ENCODE measurements at regions of chr6 and their contacts with region 1.

Region 1: DNA sequence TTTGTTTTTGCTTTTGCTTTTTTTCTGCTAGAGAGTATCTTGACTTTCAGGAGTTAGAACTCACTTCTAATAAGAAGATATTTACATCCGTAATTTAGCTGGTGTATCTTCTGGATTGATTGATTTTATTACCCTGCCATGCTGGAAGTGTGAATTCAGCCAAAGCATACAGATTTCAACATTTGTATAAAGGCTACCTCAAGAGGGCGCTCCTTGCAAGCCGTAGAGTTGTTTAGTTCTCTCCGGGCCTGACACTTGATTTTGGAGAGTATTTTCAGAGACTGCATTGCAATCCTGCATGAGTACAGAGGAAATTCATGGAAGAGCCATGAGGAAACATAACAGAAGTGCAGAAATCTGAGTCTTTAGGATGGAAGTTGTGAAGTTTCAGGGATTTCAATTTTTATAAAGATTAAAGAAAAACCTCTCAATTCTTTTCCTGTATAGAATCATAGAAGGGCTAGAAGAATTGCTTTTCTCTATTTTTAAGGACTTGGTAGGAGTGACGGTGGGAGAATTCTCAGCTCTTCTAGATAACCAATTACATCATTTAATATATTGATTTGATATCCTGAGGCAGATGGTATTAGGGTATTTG is 66.7 kb upstream of the TIAM2 start:
- DNase-seq: peak in 2 of 5 donors; percentile 48 to 57
- ATAC-seq: peak in 3 of 4 donors; percentile 57 to 65 (median 63)
- H3K4me3 ChIP-seq: no peak overlapping the region
- H3K27ac ChIP-seq: no peak overlapping the region
- H3K4me1 ChIP-seq: peaks cover 0 to 24% (median 8%) of the 10 kb centered on the region in 12 donors
- H3K27me3 ChIP-seq: no peaks in the 10 kb centered on the region
- CTCF ChIP-seq: peak; percentile 60 to 85 (median 74)
- POLR2A ChIP-seq: no peak

Region 2: GRCh38 chr6:155066361-155066760 is 137.9 kb after region 1 on chr6:
- intact Hi-C with region 1: no loop called
- DNase-seq: no peak
- ATAC-seq: no peak
- H3K4me3 ChIP-seq: no peak overlapping the region
- H3K27ac ChIP-seq: no peak overlapping the region
- H3K4me1 ChIP-seq: no peaks in the 10 kb centered on the region
- H3K27me3 ChIP-seq: no peaks in the 10 kb centered on the region
- CTCF ChIP-seq: no peak
- POLR2A ChIP-seq: no peak

Region 3: DNA sequence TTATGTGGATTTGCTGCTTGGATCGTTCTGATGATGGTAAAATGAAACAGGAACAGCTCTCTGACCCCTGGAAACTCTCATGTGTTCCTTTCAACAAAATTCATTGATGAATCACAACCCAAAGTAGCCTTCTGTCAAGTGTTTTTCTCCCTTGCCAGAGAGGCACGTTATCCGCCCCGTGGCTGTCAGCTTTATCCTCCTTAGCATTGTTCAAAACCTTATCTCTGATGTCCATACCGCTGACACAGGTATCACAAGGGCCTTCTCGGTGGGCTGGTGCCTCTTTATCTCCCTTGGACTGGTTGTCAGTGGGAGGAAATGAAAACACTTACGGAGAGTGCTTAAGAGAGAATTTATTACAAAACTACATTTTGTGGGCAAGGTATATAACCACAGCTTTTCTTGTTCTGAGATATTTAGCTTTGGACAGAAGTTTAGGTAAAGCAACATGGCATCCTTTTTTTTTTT is 151.6 kb after region 1 on chr6:
- intact Hi-C with region 1: loop called in 1 of 10 experiments (anchors 10 kb)
- DNase-seq: no peak
- ATAC-seq: no peak
- H3K4me3 ChIP-seq: no peak overlapping the region
- H3K27ac ChIP-seq: no peak overlapping the region
- H3K4me1 ChIP-seq: peaks cover 0 to 7% (median 0%) of the 10 kb centered on the region in 12 donors
- H3K27me3 ChIP-seq: no peaks in the 10 kb centered on the region
- CTCF ChIP-seq: no peak
- POLR2A ChIP-seq: no peak

Region 4: DNA sequence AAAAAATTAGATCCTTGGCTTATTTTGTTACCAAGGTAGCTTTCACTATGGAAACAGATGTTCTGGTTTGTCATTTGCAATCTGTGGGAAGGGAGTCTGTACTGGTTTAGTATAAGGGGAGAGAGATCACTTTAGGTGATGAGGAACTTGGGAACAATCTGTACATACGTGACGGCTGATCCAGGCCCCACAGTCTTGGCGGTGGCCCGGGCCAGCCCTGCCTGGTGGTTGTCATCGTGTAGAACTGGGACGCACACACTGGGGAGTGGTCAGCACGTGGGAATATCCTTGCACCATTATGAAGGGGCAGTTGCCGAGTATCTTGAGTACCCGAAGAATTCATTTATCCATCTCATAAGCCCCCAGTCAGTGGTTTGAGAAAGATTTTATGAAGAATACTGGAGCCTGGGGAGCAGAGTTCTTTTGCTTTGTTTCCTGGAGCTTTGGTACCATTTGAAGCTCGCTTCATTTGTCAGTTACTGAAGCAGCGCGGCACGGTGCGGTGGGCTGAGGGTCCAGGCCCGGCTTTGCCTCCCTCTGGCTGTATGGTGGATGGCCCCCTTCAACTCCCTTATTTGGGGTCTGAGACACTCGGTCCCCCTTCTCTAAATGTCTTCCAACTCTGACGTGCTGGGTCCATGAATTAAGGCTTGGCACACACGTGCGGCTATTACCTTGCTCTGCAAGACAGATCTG is 312.6 kb after region 1 on chr6:
- intact Hi-C with region 1: loop called in 3 of 10 experiments (anchors 5 to 10 kb)
- DNase-seq: no peak
- ATAC-seq: no peak
- H3K4me3 ChIP-seq: no peak overlapping the region
- H3K27ac ChIP-seq: no peak overlapping the region
- H3K4me1 ChIP-seq: no peaks in the 10 kb centered on the region
- H3K27me3 ChIP-seq: no peaks in the 10 kb centered on the region
- CTCF ChIP-seq: no peak
- POLR2A ChIP-seq: no peak

Region 5: GRCh38 chr6:155248008-155249001 is 319.9 kb after region 1 on chr6:
- intact Hi-C with region 1: loop called in 4 of 10 experiments (anchors 5 to 10 kb)
- DNase-seq: peak in 3 of 5 donors; percentile 24 to 38 (median 34)
- ATAC-seq: peak in 3 of 4 donors; percentile 20 to 38 (median 37)
- H3K4me3 ChIP-seq: no peak overlapping the region
- H3K27ac ChIP-seq: peak overlapping the region in 1 of 12 donors; percentile 56
- H3K4me1 ChIP-seq: peaks cover 0 to 20% (median 6%) of the 10 kb centered on the region in 12 donors
- H3K27me3 ChIP-seq: no peaks in the 10 kb centered on the region
- CTCF ChIP-seq: peak; percentile 29 to 78 (median 58)
- POLR2A ChIP-seq: no peak

Region 6: GRCh38 chr6:155253337-155253736 is 324.9 kb after region 1 on chr6:
- intact Hi-C with region 1: loop called in 3 of 10 experiments (anchors 5 to 10 kb)
- DNase-seq: no peak
- ATAC-seq: peak; percentile 30 to 61 (median 42)
- H3K4me3 ChIP-seq: no peak overlapping the region
- H3K27ac ChIP-seq: peak overlapping the region in 11 of 12 donors; percentile 11 to 65 (median 36)
- H3K4me1 ChIP-seq: peaks cover 0 to 35% (median 9%) of the 10 kb centered on the region in 12 donors
- H3K27me3 ChIP-seq: no peaks in the 10 kb centered on the region
- CTCF ChIP-seq: no peak
- POLR2A ChIP-seq: no peak

Measured in heart left ventricle (tissue), 16 donors.